ENCODE measurements at regions of chr7 and their contacts with region 1.

Region 1: DNA sequence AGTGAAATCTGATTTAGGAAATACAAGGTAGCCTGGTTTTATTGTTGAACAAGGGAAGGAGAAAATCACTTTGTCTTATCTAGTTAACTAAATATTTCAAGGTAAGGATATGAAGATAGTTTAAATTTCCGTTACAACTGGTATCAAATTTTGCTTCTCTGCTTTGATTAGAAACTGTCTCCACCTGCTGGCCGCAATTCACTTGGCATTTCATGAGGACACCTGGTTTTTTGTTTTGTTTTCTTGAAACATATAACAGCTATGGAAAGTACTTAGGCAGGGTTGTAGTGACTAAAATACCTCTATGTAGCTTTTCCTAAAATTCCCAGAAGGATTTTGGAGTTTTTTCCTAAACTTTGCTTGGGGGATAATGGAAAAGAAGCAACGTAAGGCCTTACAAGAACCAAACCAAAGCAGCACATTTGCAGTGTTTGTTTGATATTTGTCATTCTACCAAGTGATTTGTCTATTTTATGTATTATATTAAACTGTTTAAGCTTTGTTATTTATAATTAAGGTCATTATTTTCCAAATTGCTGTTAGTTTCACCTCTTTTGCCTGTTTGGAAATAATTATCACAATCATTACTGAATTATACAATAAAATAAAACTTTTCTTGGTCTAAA is 73.6 kb downstream of the AHCYL2 start:
- DNase-seq: peak in 4 of 5 donors; percentile 45 to 73 (median 56)
- H3K4me3 ChIP-seq: no peak overlapping the region
- H3K27ac ChIP-seq: no peak overlapping the region
- H3K4me1 ChIP-seq: peaks cover 0 to 3% (median 0%) of the 10 kb centered on the region in 3 donors
- H3K27me3 ChIP-seq: no peaks in the 10 kb centered on the region
- CTCF ChIP-seq: peak; percentile 81

Region 2: GRCh38 chr7:129224251-129225205 is 73.9 kb before region 1 on chr7 and contains the start of gene AHCYL2:
- intact Hi-C with region 1: loop called (anchors 10 kb)
- DNase-seq: peak; percentile 99 to 100 (median 99)
- H3K4me3 ChIP-seq: peak within 1 kb of the TSS; percentile 91 to 95 (median 95)
- H3K27ac ChIP-seq: peak within 1 kb of the TSS; percentile 96 to 99
- H3K4me1 ChIP-seq: peaks cover 0 to 6% (median 2%) of the 10 kb centered on the region in 3 donors
- H3K27me3 ChIP-seq: no peaks in the 10 kb centered on the region
- CTCF ChIP-seq: no peak
- total RNA-seq, gene AHCYL2: 25.2 TPM

Region 3: GRCh38 chr7:129343099-129343700 is 44.8 kb after region 1 on chr7:
- intact Hi-C with region 1: no loop called
- DNase-seq: peak in 2 of 5 donors; percentile 45 to 61
- H3K4me3 ChIP-seq: no peak overlapping the region
- H3K27ac ChIP-seq: no peak overlapping the region
- H3K4me1 ChIP-seq: no peaks in the 10 kb centered on the region
- H3K27me3 ChIP-seq: no peaks in the 10 kb centered on the region
- CTCF ChIP-seq: peak; percentile 47

Region 4: DNA sequence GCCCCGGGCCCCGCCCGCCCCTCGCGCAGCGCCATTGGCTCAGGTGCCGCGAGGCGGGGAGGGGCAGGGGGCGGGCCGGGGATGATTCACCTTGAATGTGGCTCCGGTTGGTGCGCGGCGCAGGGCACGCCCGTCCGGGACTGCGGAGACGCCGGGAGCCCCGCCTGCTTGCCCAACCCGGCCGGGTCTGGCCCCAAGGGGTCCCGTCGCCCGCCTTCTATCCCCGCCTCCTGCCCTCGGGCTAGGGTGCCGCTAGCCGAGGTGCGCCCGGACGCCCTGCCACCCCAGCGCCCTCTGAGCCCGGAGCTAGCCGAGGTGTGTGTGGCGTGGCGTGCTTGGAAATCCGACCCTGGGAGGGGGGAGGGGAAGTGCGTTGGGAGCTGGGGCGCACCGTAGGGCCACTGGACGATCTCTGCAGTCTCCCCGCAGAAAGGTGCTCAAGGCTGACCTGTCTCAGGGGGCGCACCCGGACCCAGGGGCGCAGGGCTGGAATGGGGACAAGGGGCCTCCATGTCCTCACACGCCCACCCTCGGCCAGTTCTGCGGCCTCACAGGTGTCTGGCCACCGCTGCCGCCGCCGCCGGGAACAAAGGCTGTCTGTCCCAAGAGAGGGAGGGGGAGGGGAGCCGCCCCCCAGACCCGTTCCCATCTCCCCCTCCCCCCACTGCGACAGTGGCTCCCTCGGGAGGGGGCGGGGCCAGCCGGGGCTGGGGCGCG is 482.0 kb after region 1 on chr7:
- intact Hi-C with region 1: no loop called
- DNase-seq: peak; percentile 81 to 94 (median 84)
- H3K4me3 ChIP-seq: peak overlapping the region; percentile 11 to 24 (median 21)
- H3K27ac ChIP-seq: no peak overlapping the region
- H3K4me1 ChIP-seq: peaks cover 0 to 20% (median 3%) of the 10 kb centered on the region in 3 donors
- H3K27me3 ChIP-seq: peaks cover 42% of the 10 kb centered on the region
- CTCF ChIP-seq: no peak

Measured in kidney (tissue), 22 donors.